PC-9 (cell line): ENCODE measurements at regions of chr2 and their contacts with region 1.

Region 1: GRCh38 chr2:25548601-25549000 is 124.8 kb downstream of the DTNB start:
- DNase-seq: no peak
- H3K4me3 ChIP-seq: no peak overlapping the region
- H3K27ac ChIP-seq: no peak overlapping the region
- H3K4me1 ChIP-seq: peaks cover 5% of the 10 kb centered on the region; the same call in 1 of the 2 replicates
- H3K27me3 ChIP-seq: no peaks in the 10 kb centered on the region
- CTCF ChIP-seq: no peak

Region 2: DNA sequence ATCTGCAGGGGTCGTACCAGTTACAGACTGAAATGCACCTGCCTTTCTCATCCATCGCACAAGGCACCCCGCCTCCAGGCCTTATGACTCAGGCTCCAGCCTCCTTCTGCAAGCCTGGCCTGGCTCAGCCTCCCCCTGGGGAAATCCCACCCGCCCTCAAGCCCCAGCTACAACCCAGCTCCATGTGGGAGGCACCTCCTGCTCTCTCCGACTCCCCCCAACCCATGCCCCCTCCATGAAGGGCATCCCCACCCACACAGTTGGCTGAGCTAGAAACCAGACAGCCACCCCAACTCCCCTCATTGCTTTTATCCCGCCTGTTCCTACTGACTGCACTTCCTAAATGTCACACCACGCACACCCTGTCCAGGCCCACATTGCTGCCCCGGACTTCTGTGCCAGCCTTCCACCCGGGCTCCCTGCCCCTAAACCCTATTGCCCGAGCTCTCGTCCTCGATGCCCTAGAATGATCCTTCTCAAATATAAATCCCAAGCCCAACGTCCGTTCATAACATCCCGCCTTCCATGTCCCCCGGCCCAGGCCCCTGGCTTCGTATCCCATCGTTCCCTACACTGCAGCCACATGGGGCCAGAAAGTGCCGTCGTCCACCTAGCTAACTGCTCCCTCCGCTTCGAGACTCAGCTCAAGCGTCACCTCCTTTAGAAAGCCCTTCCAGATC is 216.8 kb before region 1 on chr2:
- CTCF ChIA-PET with region 1: no interaction called
- POLR2A ChIA-PET with region 1: interaction called, 34 read pairs
- intact Hi-C with region 1: no loop called
- DNase-seq: peak in 1 of 2 experiments; percentile 12
- H3K4me3 ChIP-seq: no peak overlapping the region
- H3K27ac ChIP-seq: no peak overlapping the region
- H3K4me1 ChIP-seq: no peaks in the 10 kb centered on the region
- H3K27me3 ChIP-seq: no peaks in the 10 kb centered on the region
- CTCF ChIP-seq: no peak

Region 3: DNA sequence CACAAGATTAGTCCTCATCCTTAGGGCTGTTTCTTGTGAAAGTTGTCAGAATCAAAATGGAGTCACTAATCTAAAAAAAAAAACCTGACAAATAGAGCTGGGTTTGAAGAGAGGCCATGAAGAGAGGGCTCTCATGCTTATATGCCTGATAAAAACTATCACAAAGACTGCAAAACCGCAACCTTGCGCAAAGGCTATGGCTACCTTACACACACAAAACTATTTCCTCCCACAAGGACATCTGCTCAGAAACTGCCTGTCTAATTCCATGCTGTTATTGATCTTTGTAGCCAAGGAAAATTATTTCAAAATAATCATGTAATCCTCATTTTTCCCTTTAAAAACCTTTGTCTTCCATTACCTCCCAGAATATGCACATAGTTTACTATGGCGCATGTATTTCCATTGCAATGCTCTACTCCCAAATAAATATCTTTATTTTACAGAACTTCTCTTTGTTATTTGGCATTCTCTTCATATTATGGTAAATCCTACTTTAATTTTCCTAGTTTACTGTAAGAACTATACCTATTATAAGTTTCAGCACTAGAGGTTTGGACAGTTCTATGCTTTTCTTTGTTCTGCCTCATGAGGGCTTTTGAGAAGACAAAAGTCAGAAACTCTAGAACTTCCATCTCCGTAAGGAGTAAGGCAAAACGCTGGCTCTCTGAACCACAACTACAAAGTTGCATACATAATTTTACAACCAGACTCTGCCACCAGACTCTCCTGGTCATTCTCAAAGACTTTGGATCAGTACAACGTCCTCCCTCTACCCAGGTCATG is 1289.7 kb after region 1 on chr2:
- CTCF ChIA-PET with region 1: no interaction called
- POLR2A ChIA-PET with region 1: no interaction called
- intact Hi-C with region 1: no loop called
- DNase-seq: peak in 1 of 2 experiments; percentile 44
- H3K4me3 ChIP-seq: no peak overlapping the region
- H3K27ac ChIP-seq: no peak overlapping the region
- H3K4me1 ChIP-seq: no peaks in the 10 kb centered on the region
- H3K27me3 ChIP-seq: peaks cover 46% of the 10 kb centered on the region; the same call in 1 of the 2 replicates
- CTCF ChIP-seq: no peak